Calu3 (cell line): ENCODE measurements at regions of chr20 and their contacts with region 1.

Region 1: DNA sequence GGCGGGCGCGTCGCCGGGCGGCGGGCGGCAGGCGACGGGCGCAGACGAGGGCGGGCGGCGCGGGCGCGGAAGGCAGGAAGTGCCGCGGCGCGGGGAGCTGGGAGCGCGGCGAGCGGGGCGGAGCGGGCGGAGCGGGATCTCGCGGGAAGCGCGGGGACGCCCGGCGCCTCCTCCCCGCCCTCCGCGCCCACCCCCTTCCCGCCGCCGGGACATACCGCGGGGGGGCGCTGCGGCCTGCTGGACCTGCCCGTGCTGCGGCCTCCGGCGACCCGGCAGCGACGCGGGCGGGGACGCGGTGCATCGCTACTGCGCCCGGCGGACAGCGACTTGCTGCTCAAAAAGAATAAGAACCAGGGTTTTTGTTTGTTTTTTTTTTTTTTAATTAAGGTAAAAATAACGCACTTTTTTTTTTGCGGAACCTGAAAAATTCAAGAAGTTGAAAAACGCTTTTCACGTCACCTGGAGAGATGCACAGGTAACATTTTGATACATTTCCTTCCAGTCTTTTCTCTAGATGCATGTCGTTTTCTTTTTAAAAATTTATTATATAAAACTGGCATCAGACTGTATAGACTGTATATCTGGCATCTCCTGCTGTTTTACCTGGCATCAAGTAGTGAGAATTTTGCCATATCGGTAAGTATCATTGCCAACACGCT is at the start of gene CENPB:
- DNase-seq: peak; percentile 94
- H3K4me3 Mint-ChIP-seq: peak within 1 kb of the TSS; percentile 50
- H3K27ac Mint-ChIP-seq: no peak within 1 kb of the TSS
- H3K4me1 Mint-ChIP-seq: peaks cover 21% of the 10 kb centered on the region
- H3K27me3 Mint-ChIP-seq: no peaks in the 10 kb centered on the region
- CTCF ChIP-seq: peak; percentile 73
- total RNA-seq, gene CENPB: 44.7 and 44.9 TPM in 2 replicates

Region 2: GRCh38 chr20:3820048-3820900 is 33.5 kb after region 1 on chr20 and contains the start of gene AP5S1:
- CTCF ChIA-PET with region 1: interaction called, 25 read pairs
- intact Hi-C with region 1: loop called (anchors 2 kb)
- DNase-seq: peak; percentile 90
- H3K4me3 Mint-ChIP-seq: peak within 1 kb of the TSS; percentile 81
- H3K27ac Mint-ChIP-seq: peak within 1 kb of the TSS; percentile 92
- H3K4me1 Mint-ChIP-seq: peaks cover 14% of the 10 kb centered on the region
- H3K27me3 Mint-ChIP-seq: no peaks in the 10 kb centered on the region
- CTCF ChIP-seq: peak; percentile 77
- total RNA-seq, gene AP5S1: 7.2 and 9.5 TPM in 2 replicates